ENCODE measurements at regions of chr1 and their contacts with region 1.

Region 1: GRCh38 chr1:36369061-36369861 is 16.5 kb downstream of the STK40 start:
- DNase-seq: peak; percentile 76
- H3K4me3 Mint-ChIP-seq: no peak overlapping the region
- H3K27ac Mint-ChIP-seq: peak overlapping the region; percentile 37
- H3K4me1 Mint-ChIP-seq: peaks cover 33% of the 10 kb centered on the region
- H3K27me3 Mint-ChIP-seq: no peaks in the 10 kb centered on the region
- CTCF ChIP-seq: peak; percentile 84

Region 2: GRCh38 chr1:35894183-35894582 is 475.1 kb before region 1 on chr1:
- CTCF ChIA-PET with region 1: no interaction called
- POLR2A ChIA-PET with region 1: no interaction called
- intact Hi-C with region 1: no loop called
- DNase-seq: no peak
- H3K4me3 Mint-ChIP-seq: no peak overlapping the region
- H3K27ac Mint-ChIP-seq: no peak overlapping the region
- H3K4me1 Mint-ChIP-seq: no peaks in the 10 kb centered on the region
- H3K27me3 Mint-ChIP-seq: no peaks in the 10 kb centered on the region
- CTCF ChIP-seq: no peak

Region 3: DNA sequence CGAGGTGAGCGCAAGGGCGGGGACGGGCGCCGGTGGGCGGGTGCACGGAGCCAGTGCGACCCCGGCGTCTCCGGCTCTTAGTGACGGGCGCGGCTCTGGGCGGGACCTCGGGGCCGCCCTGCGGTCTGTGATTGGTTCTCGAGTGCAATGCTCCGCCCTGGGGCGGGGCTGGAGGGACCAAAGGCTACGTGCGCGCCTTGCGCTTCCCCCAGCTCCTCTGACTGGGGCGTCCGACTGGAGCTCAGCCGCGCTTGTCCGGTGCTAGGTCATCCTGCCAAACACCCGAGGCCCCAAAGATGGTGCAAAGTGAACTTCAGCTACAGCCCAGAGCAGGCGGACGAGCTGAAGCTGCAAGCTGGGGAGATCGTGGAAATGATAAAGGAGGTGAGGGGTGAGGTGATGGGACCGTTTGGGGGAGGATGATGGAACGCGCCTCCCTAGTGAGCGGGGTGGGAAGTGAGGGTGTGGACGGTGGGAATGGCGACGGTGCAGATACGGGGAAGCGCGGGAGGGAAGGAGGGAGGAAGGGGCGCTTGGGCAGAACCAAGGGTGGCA is 62.3 kb before region 1 on chr1:
- CTCF ChIA-PET with region 1: interaction called, 18 read pairs
- POLR2A ChIA-PET with region 1: interaction called, 5 read pairs
- intact Hi-C with region 1: no loop called
- DNase-seq: peak; percentile 93
- H3K4me3 Mint-ChIP-seq: peak overlapping the region; percentile 72
- H3K27ac Mint-ChIP-seq: no peak overlapping the region
- H3K4me1 Mint-ChIP-seq: peaks cover 6% of the 10 kb centered on the region
- H3K27me3 Mint-ChIP-seq: no peaks in the 10 kb centered on the region
- CTCF ChIP-seq: no peak

Region 4: DNA sequence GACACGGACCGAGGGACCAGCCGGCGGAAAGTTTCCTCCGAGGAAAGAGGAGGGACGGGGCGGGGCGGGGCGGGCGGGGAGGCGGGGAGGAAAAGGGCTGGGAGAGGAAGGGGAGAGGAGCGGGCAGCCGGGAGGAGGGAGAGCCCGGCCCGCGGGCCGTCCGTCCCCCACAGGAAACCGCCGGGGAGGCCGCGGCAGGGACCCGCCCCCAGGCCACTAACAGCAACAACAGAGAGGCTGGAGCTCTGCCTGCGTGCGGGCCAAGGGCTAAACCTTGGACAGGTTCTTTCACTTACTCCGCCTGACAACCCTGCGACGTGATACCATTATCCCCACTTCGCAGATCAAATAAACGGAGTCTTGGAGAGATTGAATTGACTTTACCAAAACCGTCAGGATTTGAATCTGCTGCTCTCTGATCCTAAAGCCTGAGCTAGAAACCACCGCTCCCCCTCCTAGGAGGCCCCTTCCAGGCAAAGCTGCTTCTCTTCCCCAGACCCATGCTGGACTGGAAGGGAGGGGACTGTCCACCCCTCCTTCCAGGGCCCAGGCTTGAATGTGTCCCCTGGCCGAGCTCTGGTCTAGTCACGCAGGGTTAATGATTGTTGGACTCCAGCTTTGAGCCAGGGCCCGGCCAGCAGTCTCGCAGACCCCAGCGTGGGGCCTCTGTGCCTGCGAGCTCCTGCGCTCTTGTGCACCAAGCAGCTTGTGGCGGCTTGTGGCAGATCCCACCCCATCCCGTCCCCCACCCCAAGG is 45.5 kb before region 1 on chr1 and contains the start of gene EVA1B:
- CTCF ChIA-PET with region 1: interaction called, 16 read pairs
- POLR2A ChIA-PET with region 1: no interaction called
- intact Hi-C with region 1: no loop called
- DNase-seq: peak; percentile 50
- H3K4me3 Mint-ChIP-seq: peak within 1 kb of the TSS; percentile 19
- H3K27ac Mint-ChIP-seq: no peak within 1 kb of the TSS
- H3K4me1 Mint-ChIP-seq: peaks cover 23% of the 10 kb centered on the region
- H3K27me3 Mint-ChIP-seq: no peaks in the 10 kb centered on the region
- CTCF ChIP-seq: no peak
- total RNA-seq, gene EVA1B: 4.8 and 5.7 TPM in 2 replicates

Region 5: GRCh38 chr1:36350659-36351226 is 18.5 kb before region 1 on chr1:
- CTCF ChIA-PET with region 1: interaction called, 118 read pairs
- POLR2A ChIA-PET with region 1: interaction called, 7 read pairs
- intact Hi-C with region 1: no loop called
- DNase-seq: peak; percentile 77
- H3K4me3 Mint-ChIP-seq: peak overlapping the region; percentile 15
- H3K27ac Mint-ChIP-seq: peak overlapping the region; percentile 82
- H3K4me1 Mint-ChIP-seq: peaks cover 39% of the 10 kb centered on the region
- H3K27me3 Mint-ChIP-seq: no peaks in the 10 kb centered on the region
- CTCF ChIP-seq: no peak

Region 6: DNA sequence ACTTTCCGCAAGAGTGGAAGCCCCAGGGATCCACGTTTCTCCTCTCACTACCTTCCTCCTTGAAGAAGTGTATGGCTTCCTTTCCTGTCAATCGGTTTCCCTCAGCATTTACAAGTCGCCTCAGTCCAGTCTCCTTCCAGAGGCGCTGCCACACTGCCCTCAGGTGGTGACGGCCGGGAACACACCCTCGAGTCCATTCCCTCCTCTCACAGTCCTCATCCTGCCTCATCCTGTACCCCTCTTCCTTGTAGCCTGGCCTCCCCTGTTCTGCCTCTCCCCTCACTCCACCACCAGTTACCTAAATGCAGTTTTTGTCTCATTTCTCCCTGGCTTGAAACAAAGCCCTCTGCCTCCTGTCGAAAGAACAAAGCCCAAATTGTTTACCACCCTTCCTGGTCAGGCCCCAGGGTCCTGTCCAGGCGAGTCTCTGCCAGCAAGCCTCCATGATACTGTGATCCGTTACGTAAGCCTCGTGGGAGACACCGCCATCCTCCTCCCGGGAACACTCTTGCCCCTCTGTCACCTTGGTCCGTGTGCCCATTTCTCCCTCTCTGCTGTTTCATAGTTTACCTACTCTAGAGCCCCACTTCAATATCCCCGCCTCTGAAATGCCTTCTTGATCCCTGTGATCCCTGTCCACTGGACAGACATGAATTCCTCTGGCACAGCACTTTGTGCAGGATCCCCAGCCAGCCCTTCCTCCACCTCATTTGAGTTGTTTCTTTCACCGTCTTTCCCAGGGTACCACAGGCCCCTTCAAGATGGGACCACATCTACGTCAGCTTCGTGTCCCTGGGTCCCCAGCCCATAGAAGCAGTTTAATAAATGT is 51.8 kb after region 1 on chr1:
- CTCF ChIA-PET with region 1: interaction called, 18 read pairs
- POLR2A ChIA-PET with region 1: no interaction called
- intact Hi-C with region 1: loop called (anchors 2 kb)
- DNase-seq: peak; percentile 83
- H3K4me3 Mint-ChIP-seq: no peak overlapping the region
- H3K27ac Mint-ChIP-seq: peak overlapping the region; percentile 76
- H3K4me1 Mint-ChIP-seq: peaks cover 14% of the 10 kb centered on the region
- H3K27me3 Mint-ChIP-seq: no peaks in the 10 kb centered on the region
- CTCF ChIP-seq: peak; percentile 96